ENCODE measurements at regions of chr21 and their contacts with region 1.

Region 1: GRCh38 chr21:35051287-35051818 is 2.3 kb upstream of the RUNX1 start:
- DNase-seq: peak; percentile 54
- ATAC-seq: peak; percentile 45
- H3K4me3 Mint-ChIP-seq: peak overlapping the region; percentile 68
- H3K27ac Mint-ChIP-seq: peak overlapping the region; percentile 97
- H3K4me1 Mint-ChIP-seq: peaks cover 60% of the 10 kb centered on the region
- H3K27me3 Mint-ChIP-seq: no peaks in the 10 kb centered on the region
- CTCF ChIP-seq: no peak

Region 2: DNA sequence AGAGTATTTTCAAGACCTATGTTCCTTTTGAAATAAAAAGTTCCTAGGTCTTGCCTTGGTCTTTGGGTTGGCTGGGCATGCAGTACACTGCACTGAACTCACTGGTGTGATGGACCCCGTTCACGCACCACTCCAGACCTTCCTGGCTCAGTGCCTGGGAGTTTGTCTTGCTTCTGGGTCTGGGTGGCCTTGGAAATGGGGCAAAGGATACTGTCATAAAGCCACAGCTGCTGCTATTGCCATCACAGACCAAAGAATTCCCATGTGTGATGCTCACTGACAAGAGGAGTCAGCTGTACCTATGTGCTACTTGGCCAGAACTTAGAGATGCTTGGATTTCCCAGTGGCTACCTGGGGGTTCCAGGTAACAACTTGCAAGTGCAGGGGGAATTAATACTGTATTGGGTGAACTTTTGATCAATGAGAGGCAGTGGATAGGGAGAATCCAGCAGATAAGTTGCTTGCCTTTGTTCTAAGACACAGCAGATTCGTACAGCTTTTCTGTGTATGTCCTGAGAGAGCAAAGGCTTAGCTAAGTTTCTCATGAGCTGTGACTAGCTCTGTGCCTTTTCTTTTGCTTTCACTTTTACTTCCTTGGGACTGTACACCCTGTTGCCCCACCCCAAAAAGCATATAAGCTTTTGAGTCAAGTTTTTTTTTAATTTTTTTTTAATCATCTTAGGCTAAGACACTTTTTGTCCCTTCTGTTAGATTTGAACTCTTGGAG is 117.6 kb before region 1 on chr21:
- CTCF ChIA-PET with region 1: interaction called, 3 read pairs
- POLR2A ChIA-PET with region 1: interaction called, 36 read pairs
- intact Hi-C with region 1: loop called (anchors 2 kb)
- DNase-seq: no peak
- ATAC-seq: peak; percentile 98
- H3K4me3 Mint-ChIP-seq: peak overlapping the region; percentile 78
- H3K27ac Mint-ChIP-seq: peak overlapping the region; percentile 91
- H3K4me1 Mint-ChIP-seq: peaks cover 73% of the 10 kb centered on the region
- H3K27me3 Mint-ChIP-seq: no peaks in the 10 kb centered on the region
- CTCF ChIP-seq: no peak

Region 3: GRCh38 chr21:35026617-35027562 is 24.5 kb before region 1 on chr21:
- CTCF ChIA-PET with region 1: interaction called, 10 read pairs
- POLR2A ChIA-PET with region 1: interaction called, 101 read pairs
- intact Hi-C with region 1: no loop called
- DNase-seq: peak; percentile 73
- ATAC-seq: peak; percentile 90
- H3K4me3 Mint-ChIP-seq: peak overlapping the region; percentile 87
- H3K27ac Mint-ChIP-seq: peak overlapping the region; percentile 98
- H3K4me1 Mint-ChIP-seq: peaks cover 65% of the 10 kb centered on the region
- H3K27me3 Mint-ChIP-seq: no peaks in the 10 kb centered on the region
- CTCF ChIP-seq: no peak

Region 4: DNA sequence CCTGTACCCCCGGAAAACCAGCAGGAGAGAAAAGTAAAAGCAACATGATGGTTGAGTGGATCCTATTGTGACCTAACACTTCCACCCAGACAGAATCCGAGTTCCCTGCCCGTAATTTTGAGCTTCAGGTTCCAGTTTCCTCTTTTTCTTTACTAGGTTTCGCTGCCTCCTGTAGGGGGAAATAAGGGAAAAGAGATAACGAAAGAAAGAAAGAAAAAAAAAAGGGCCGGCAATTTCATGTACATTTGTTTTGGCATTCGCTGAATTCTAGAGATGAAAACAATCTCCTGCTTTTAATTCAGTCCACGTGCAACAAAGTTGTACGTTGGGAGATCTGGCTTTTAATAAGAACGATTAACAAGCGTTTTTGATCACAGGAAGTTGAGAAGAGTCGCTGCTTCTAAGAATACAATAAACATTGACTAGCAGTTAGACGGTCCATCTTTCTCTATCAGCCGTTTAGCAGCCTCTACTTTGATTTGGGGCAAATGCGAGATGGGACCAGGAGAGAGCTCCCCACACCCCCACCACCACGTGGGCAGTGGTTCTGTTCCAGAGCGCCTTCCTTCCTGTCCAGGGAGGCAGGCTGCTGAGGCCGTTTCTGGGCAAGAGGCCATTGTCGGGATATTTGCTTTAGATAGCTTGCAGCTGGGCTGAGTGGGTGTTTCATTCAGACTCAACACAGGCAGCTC is 153.6 kb after region 1 on chr21:
- CTCF ChIA-PET with region 1: interaction called, 10 read pairs
- POLR2A ChIA-PET with region 1: interaction called, 23 read pairs
- intact Hi-C with region 1: loop called (anchors 1 kb)
- DNase-seq: no peak
- ATAC-seq: peak; percentile 51
- H3K4me3 Mint-ChIP-seq: peak overlapping the region; percentile 82
- H3K27ac Mint-ChIP-seq: peak overlapping the region; percentile 81
- H3K4me1 Mint-ChIP-seq: peaks cover 33% of the 10 kb centered on the region
- H3K27me3 Mint-ChIP-seq: no peaks in the 10 kb centered on the region
- CTCF ChIP-seq: no peak

Region 5: GRCh38 chr21:35358008-35358407 is 306.7 kb after region 1 on chr21:
- CTCF ChIA-PET with region 1: interaction called, 3 read pairs
- POLR2A ChIA-PET with region 1: interaction called, 6 read pairs
- intact Hi-C with region 1: loop called (anchors 1 kb)
- DNase-seq: no peak
- ATAC-seq: peak; percentile 60
- H3K4me3 Mint-ChIP-seq: no peak overlapping the region
- H3K27ac Mint-ChIP-seq: peak overlapping the region; percentile 43
- H3K4me1 Mint-ChIP-seq: peaks cover 7% of the 10 kb centered on the region
- H3K27me3 Mint-ChIP-seq: no peaks in the 10 kb centered on the region
- CTCF ChIP-seq: no peak

Region 6: DNA sequence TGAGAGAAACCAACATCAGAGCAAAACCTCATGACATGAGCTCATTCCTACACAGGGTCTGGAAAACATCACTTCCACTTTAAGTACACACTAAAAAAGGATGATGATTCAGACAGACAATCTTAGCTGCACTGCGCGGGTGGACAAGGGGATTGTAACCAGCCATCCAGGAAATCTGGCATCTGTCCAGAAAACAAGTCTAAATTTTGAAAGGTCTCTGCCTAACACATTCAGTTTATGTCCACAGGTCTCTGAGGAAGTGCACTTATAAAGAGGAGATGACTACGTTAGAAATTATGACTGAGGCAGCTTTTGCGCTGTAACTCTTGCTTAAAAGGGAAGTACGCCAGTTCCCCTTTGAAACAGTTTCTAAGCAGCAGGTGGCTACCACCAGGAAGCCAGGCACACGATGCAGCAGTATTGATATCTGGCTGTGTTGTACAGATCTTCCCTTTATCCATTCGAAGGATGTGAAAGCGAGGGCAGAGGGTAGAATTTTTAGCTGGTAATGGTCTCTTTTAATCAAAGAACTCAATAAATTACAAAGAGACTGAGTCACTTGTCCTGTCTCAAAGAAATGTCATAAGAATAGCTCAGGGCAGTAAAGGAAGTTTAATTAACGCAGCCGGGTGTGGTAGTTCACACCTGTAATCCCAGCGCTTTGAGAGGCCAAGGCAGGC is 881.0 kb after region 1 on chr21:
- CTCF ChIA-PET with region 1: no interaction called
- POLR2A ChIA-PET with region 1: interaction called, 9 read pairs
- intact Hi-C with region 1: loop called (anchors 2 kb)
- DNase-seq: no peak
- ATAC-seq: peak; percentile 93
- H3K4me3 Mint-ChIP-seq: no peak overlapping the region
- H3K27ac Mint-ChIP-seq: no peak overlapping the region
- H3K4me1 Mint-ChIP-seq: no peaks in the 10 kb centered on the region
- H3K27me3 Mint-ChIP-seq: no peaks in the 10 kb centered on the region
- CTCF ChIP-seq: no peak

Measured in activated B cell treated with CpG ODN at 0.5 μM for 24 hours (primary cell).